GM10248 (cell line): ENCODE measurements at regions of chr6 and their contacts with region 1.

Region 1: GRCh38 chr6:107026965-107027364 is 1.0 kb upstream of the MTRES1 start:
- DNase-seq: no peak
- CTCF ChIP-seq: peak; percentile 3

Region 2: GRCh38 chr6:107045826-107046613 is 19.1 kb after region 1 on chr6:
- CTCF ChIA-PET with region 1: interaction called, 12 read pairs
- POLR2A ChIA-PET with region 1: no interaction called
- DNase-seq: no peak
- CTCF ChIP-seq: no peak